AG04450 (cell line): ENCODE measurements at regions of chr6 and their contacts with region 1.

Region 1: GRCh38 chr6:107691062-107691751 is 132.9 kb downstream of the SCML4 start:
- DNase-seq: no peak
- H3K4me3 ChIP-seq: 0 out of 2 replicates have a peak overlapping the region, but pooled peaks have one; percentile 7
- H3K27ac ChIP-seq: peak overlapping the region; percentile 85
- H3K27me3 ChIP-seq: no peaks in the 10 kb centered on the region
- CTCF ChIP-seq: no peak

Region 2: DNA sequence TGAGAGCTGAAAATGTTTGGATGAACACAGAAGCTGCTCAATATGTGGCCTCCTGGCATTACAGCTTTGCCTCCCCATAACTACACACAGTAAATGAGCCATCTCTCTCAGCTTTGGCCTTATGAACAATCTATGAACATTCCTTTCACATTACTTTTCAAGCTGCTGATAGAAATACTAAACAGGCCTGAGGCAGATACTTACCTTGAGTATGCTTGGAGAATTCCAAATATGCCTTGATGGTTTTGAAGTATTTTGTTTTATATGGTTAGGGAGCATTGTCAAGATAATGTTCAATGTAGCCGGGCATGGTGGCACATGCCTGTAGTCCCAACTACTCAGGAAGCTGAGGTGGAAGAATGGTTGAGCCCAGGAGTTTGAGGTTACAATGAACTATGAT is 821.1 kb before region 1 on chr6:
- CTCF ChIA-PET with region 1: no interaction called
- POLR2A ChIA-PET with region 1: no interaction called
- DNase-seq: peak; percentile 16
- H3K4me3 ChIP-seq: no peak overlapping the region
- H3K27ac ChIP-seq: no peak overlapping the region
- H3K27me3 ChIP-seq: no peaks in the 10 kb centered on the region
- CTCF ChIP-seq: no peak

Region 3: GRCh38 chr6:107704347-107705013 is 13.3 kb after region 1 on chr6:
- CTCF ChIA-PET with region 1: interaction called, 44 read pairs
- POLR2A ChIA-PET with region 1: no interaction called
- DNase-seq: no peak
- H3K4me3 ChIP-seq: no peak overlapping the region; the same call in 1 of the 2 replicates
- H3K27ac ChIP-seq: no peak overlapping the region
- H3K27me3 ChIP-seq: no peaks in the 10 kb centered on the region
- CTCF ChIP-seq: peak; percentile 82